K562 (cell line): ENCODE measurements at regions of chr2 and their contacts with region 1.

Region 1: GRCh38 chr2:45494269-45494977 is 116.6 kb downstream of the SRBD1 start:
- DNase-seq: peak; percentile 20 to 64 (median 25)
- ATAC-seq: peak; percentile 49; the same call in 1 of the 3 replicates
- H3K4me3 ChIP-seq: no peak overlapping the region
- H3K27ac ChIP-seq: no peak overlapping the region
- H3K4me1 ChIP-seq: no peaks in the 10 kb centered on the region
- H3K27me3 ChIP-seq: no peaks in the 10 kb centered on the region
- CTCF ChIP-seq: peak; percentile 49 to 82 (median 56); a peak in 5 of 6 replicates
- EP300 ChIP-seq: no peak
- POLR2A ChIP-seq: no peak
- RAD21 ChIP-seq: peak; percentile 78 to 83

Region 2: GRCh38 chr2:44974064-44974715 is 520.2 kb before region 1 on chr2:
- CTCF ChIA-PET with region 1: interaction called, 3 read pairs
- POLR2A ChIA-PET with region 1: no interaction called
- in situ Hi-C with region 1: loop called (anchors 5 kb)
- intact Hi-C with region 1: no loop called
- DNase-seq: peak; percentile 59 to 68 (median 60)
- ATAC-seq: peak; percentile 86
- H3K4me3 ChIP-seq: no peak overlapping the region
- H3K27ac ChIP-seq: no peak overlapping the region
- H3K4me1 ChIP-seq: peaks cover 0 to 9% of the 10 kb centered on the region in 2 experiments; a peak in 2 of 5 replicates
- H3K27me3 ChIP-seq: peaks cover 10 to 42% of the 10 kb centered on the region in 2 experiments
- CTCF ChIP-seq: peak; percentile 61 to 79 (median 78); a peak in 5 of 6 replicates
- EP300 ChIP-seq: no peak
- POLR2A ChIP-seq: no peak
- RAD21 ChIP-seq: peak; percentile 32 to 67

Region 3: GRCh38 chr2:44981136-44982108 is 513.0 kb before region 1 on chr2:
- CTCF ChIA-PET with region 1: interaction called, 38 read pairs
- POLR2A ChIA-PET with region 1: interaction called, 4 read pairs
- in situ Hi-C with region 1: loop called (anchors 5 kb)
- intact Hi-C with region 1: loop called (anchors 1 kb)
- DNase-seq: peak; percentile 71 to 80 (median 74)
- ATAC-seq: peak; percentile 93
- H3K4me3 ChIP-seq: no peak overlapping the region
- H3K27ac ChIP-seq: no peak overlapping the region
- H3K4me1 ChIP-seq: no peaks in the 10 kb centered on the region
- H3K27me3 ChIP-seq: peaks cover 5% of the 10 kb centered on the region in 2 experiments; a peak in 3 of 5 replicates
- CTCF ChIP-seq: peak; percentile 75 to 86 (median 82)
- EP300 ChIP-seq: no peak
- POLR2A ChIP-seq: no peak
- RAD21 ChIP-seq: peak; percentile 84 to 92

Region 4: DNA sequence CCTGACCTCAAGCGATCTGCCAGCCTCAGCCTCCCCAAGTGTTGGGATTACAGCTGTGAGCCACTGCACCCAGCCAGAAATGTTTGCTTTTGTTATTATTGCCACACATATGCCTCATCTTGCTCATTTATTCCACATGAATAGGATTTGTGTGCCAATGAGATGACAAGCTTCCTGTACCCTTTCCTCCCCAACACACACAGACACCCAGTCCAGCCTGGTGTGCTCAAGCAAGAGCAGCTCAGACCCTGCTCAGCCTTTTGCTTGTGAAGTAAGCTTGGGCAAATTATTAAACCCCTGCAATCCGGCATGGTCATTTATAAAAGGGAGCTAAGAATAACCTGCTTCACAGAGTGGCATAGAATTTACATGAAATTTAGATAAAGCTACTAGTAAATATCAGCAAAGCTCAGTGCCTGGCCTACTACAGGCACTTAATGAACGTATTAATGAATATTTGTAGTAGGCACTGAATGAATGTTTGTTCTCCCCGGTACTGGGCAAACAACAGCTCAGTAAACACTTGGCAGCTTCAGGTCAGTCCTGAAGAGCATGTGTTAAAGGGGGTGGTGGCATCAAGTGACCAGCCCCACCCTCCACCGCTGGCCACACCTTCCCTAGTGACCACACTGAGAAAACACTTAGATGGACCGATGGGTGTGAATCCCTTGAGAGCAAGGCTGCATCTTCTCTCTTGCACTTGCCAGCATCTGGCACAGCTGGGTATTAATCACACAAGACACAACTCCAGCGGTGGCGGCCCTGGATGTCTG is 163.6 kb before region 1 on chr2:
- CTCF ChIA-PET with region 1: no interaction called
- POLR2A ChIA-PET with region 1: no interaction called
- in situ Hi-C with region 1: no loop called
- intact Hi-C with region 1: loop called (anchors 10 kb)
- DNase-seq: no peak
- ATAC-seq: no peak
- H3K4me3 ChIP-seq: no peak overlapping the region
- H3K27ac ChIP-seq: no peak overlapping the region
- H3K4me1 ChIP-seq: no peaks in the 10 kb centered on the region
- H3K27me3 ChIP-seq: peaks cover 28 to 73% of the 10 kb centered on the region in 2 experiments
- CTCF ChIP-seq: no peak
- EP300 ChIP-seq: no peak
- POLR2A ChIP-seq: no peak
- RAD21 ChIP-seq: no peak